Common myeloid progenitor, CD34-positive (primary cell): ENCODE measurements at regions of chr7 and their contacts with region 1.

Region 1: GRCh38 chr7:150404805-150405583 is 25.9 kb downstream of the ZNF775 start:
- DNase-seq: peak; percentile 89 to 94 (median 91)
- H3K4me3 ChIP-seq: peak overlapping the region; percentile 65 to 90 (median 79)
- H3K27ac ChIP-seq: peak overlapping the region; percentile 64 to 95
- H3K4me1 ChIP-seq: peaks cover 0 to 33% (median 31%) of the 10 kb centered on the region in 4 experiments
- H3K27me3 ChIP-seq: no peaks in the 10 kb centered on the region

Region 2: GRCh38 chr7:150368096-150368883 is 36.7 kb before region 1 on chr7 and contains the start of gene REPIN1:
- CTCF ChIA-PET with region 1: interaction called, 11 read pairs
- POLR2A ChIA-PET with region 1: interaction called, 5 read pairs
- DNase-seq: peak; percentile 90 to 97 (median 96)
- H3K4me3 ChIP-seq: peak within 1 kb of the TSS; percentile 57 to 96 (median 83)
- H3K27ac ChIP-seq: peak within 1 kb of the TSS; percentile 96 to 97
- H3K4me1 ChIP-seq: peaks cover 39 to 78% (median 76%) of the 10 kb centered on the region in 4 experiments
- H3K27me3 ChIP-seq: no peaks in the 10 kb centered on the region

Region 3: GRCh38 chr7:150378853-150379440 is 26.0 kb before region 1 on chr7 and contains the start of gene ZNF775:
- CTCF ChIA-PET with region 1: interaction called, 14 read pairs
- POLR2A ChIA-PET with region 1: no interaction called
- DNase-seq: peak; percentile 92 to 95 (median 94)
- H3K4me3 ChIP-seq: peak within 1 kb of the TSS; percentile 73 to 90 (median 84)
- H3K27ac ChIP-seq: peak within 1 kb of the TSS; percentile 50 to 90
- H3K4me1 ChIP-seq: peaks cover 11 to 54% (median 31%) of the 10 kb centered on the region in 4 experiments
- H3K27me3 ChIP-seq: no peaks in the 10 kb centered on the region

Region 4: DNA sequence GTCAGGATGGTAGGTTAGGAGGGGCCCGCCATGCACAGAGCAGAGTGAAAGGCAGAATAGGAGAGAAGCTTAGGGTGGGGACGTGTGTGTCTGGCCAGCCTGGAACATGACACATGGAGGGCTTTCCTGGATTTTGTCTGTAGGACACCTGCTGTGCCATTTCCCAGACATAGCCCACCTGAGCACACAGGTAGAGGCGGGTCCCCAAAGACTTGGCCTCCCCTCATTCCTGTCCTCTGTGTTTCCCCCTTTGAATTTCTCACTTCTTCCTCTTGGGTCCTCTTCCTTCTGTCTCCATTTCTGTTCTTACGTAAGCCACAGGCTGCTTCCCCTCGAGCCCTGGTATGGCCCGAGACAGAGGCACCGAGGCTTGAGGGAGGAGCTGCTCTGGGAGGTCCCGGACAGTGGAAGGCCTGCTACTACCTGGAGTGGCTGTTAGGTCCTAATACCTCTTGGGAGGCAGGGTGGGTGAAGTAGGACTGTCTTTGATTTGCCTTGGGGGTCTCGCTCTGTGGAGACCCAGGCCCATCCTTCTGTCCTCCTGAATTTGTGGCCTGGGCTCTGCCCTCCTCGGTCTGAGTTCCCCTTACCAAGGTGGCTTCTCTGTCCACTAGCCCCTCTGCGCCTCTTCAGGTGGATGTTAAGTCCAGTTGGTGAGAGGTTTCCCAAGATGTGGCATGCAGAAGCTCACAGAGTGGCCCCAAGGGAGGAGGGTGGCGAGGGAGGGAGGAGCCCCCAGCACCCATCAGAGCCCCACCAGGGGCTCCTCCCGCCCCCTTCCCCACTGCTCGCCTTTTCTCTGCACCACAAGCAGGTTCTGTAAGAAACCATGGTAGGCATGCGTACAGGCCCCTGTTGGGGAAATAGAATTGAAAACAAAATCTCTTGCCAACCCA is 20.3 kb before region 1 on chr7:
- CTCF ChIA-PET with region 1: interaction called, 10 read pairs
- POLR2A ChIA-PET with region 1: interaction called, 6 read pairs
- DNase-seq: no peak
- H3K4me3 ChIP-seq: no peak overlapping the region
- H3K27ac ChIP-seq: no peak overlapping the region
- H3K4me1 ChIP-seq: peaks cover 1 to 32% (median 4%) of the 10 kb centered on the region in 4 experiments
- H3K27me3 ChIP-seq: no peaks in the 10 kb centered on the region

Region 5: GRCh38 chr7:150420987-150421674 is 16.1 kb after region 1 on chr7:
- CTCF ChIA-PET with region 1: interaction called, 29 read pairs
- POLR2A ChIA-PET with region 1: interaction called, 6 read pairs
- DNase-seq: peak; percentile 76 to 86 (median 85)
- H3K4me3 ChIP-seq: no peak overlapping the region
- H3K27ac ChIP-seq: no peak overlapping the region
- H3K4me1 ChIP-seq: peaks cover 0 to 2% (median 0%) of the 10 kb centered on the region in 4 experiments
- H3K27me3 ChIP-seq: peaks cover 0 to 1% (median 0%) of the 10 kb centered on the region in 5 experiments